ENCODE measurements at regions of chr4 and their contacts with region 1.

Region 1: DNA sequence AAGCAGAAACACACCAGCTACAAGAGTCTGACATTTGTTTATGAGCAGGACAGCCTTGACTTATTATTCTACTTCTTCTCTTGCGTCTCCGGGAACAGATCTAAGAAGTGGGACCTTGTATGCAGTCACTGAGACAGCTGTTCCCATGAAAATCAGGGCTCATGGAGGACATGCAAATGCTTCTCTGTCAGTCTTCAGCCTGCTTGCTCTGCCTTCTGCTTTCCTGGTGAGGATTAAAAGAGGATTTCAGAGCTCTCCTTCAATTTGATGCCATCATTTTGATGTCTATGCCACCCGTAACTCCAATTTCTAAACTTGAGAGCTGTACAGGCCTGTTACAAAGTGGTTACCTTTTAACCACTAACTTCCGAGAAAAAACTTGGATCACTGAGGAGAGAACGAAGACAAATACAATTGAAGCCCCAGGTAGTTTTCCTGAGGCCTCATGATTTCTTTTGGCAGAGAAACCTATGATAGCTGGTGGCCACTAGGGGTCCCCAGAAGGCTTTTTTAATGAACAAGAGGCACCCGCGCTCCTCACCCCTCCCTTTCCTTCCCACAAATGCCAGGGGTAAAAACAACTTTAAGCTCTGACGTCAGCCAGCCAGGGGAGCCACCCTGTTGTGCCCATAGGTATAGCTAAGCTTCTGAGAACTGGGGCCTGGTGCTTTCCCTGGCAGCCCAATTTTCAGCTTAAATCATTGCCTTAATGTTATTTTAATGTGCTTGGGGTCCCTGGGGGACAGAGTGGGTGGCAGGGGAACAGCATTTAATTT is 97.0 kb downstream of the DDIT4L start:
- DNase-seq: peak; percentile 62 to 94
- H3K4me3 ChIP-seq: no peak overlapping the region
- H3K27ac ChIP-seq: peak overlapping the region; percentile 37 to 64
- H3K4me1 ChIP-seq: peaks cover 0 to 9% of the 10 kb centered on the region in 2 donors
- H3K27me3 ChIP-seq: no peaks in the 10 kb centered on the region
- CTCF ChIP-seq: peak; percentile 45 to 88 (median 84)

Region 2: DNA sequence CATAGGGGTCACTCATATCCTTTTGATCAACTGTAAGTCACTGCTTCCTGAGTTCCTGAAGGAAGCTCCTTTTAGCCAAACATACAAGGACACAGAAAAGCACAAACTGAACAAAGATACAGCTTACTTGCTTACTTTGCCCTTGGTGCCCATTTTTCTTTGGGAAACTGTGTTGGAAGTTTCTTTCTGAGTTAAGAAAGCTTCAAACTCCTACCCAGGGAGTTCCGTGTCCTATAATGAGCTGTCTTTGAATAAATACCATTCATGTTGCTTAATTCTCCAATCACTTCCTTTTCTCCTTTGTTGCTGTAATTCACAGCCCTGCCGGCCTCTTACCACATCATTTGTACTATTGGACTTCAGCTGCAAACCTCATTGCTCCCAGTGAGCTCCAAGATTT is 949.2 kb before region 1 on chr4 and contains the start of gene ADH4:
- intact Hi-C with region 1: loop called (anchors 5 kb)
- DNase-seq: no peak
- H3K4me3 ChIP-seq: no peak within 1 kb of the TSS
- H3K27ac ChIP-seq: peak within 1 kb of the TSS; percentile 27 to 35
- H3K4me1 ChIP-seq: peaks cover 0 to 2% of the 10 kb centered on the region in 2 donors
- H3K27me3 ChIP-seq: no peaks in the 10 kb centered on the region
- CTCF ChIP-seq: no peak
- total RNA-seq, gene ADH4: 0.96 TPM

Region 3: GRCh38 chr4:100299046-100299840 is 206.0 kb after region 1 on chr4:
- intact Hi-C with region 1: loop called (anchors 5 kb)
- DNase-seq: peak in 1 of 2 donors; percentile 67
- H3K4me3 ChIP-seq: no peak overlapping the region
- H3K27ac ChIP-seq: peak overlapping the region; percentile 37 to 39
- H3K4me1 ChIP-seq: peaks cover 0 to 22% of the 10 kb centered on the region in 2 donors
- H3K27me3 ChIP-seq: no peaks in the 10 kb centered on the region
- CTCF ChIP-seq: no peak

Region 4: DNA sequence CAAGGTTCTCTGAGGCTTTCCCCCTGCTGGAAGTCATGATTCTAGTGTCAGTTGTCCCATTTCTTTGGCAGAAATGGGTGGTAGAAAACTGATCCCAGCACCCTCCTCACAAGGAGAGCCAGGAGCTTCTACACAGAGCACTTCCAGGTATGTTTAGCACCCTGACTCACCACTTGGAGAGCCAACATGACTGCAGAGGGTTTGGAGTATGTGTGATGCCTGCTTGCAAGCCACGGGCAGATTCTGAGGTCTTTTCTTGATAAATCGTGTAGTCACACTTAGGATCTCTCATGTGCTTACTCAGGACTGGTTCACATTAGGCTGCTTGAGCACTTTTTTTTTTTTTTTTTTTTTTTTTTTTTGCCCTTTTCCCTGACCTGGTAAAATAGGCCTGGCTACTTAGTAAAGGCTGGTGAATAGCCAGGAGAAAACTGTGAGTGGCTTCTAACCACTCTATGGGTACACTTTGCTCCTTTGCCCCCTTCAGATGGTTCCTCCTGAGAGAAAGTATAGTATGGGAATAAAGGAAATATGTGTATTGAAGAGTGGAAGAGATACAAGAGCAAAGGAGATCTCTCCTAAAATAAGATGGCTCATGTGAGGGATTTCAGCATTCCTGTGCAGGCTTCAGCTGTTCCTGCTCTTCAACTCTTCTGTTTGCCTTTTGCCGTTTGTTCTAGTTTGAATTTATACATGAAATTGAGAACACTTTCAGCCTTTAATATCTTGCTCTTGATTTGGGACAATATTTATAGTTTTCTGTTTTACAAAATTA is 320.9 kb after region 1 on chr4:
- intact Hi-C with region 1: loop called (anchors 5 kb)
- DNase-seq: no peak
- H3K4me3 ChIP-seq: no peak overlapping the region
- H3K27ac ChIP-seq: peak overlapping the region in 1 of 2 donors; percentile 28
- H3K4me1 ChIP-seq: no peaks in the 10 kb centered on the region
- H3K27me3 ChIP-seq: no peaks in the 10 kb centered on the region
- CTCF ChIP-seq: no peak

Region 5: GRCh38 chr4:100421361-100421978 is 328.2 kb after region 1 on chr4:
- intact Hi-C with region 1: loop called (anchors 2 kb)
- DNase-seq: no peak
- H3K4me3 ChIP-seq: peak overlapping the region in 1 of 2 donors; percentile 9
- H3K27ac ChIP-seq: peak overlapping the region in 1 of 2 donors; percentile 46
- H3K4me1 ChIP-seq: peaks cover 0 to 8% of the 10 kb centered on the region in 2 donors
- H3K27me3 ChIP-seq: no peaks in the 10 kb centered on the region
- CTCF ChIP-seq: peak in 2 of 3 experiments; percentile 46 to 49

Region 6: GRCh38 chr4:100742045-100742444 is 648.8 kb after region 1 on chr4:
- intact Hi-C with region 1: loop called (anchors 5 kb)
- DNase-seq: no peak
- H3K4me3 ChIP-seq: no peak overlapping the region
- H3K27ac ChIP-seq: no peak overlapping the region
- H3K4me1 ChIP-seq: no peaks in the 10 kb centered on the region
- H3K27me3 ChIP-seq: no peaks in the 10 kb centered on the region
- CTCF ChIP-seq: peak in 1 of 3 experiments; percentile 19

Region 7: GRCh38 chr4:101169044-101170014 is 1076.0 kb after region 1 on chr4:
- intact Hi-C with region 1: loop called (anchors 10 kb)
- DNase-seq: peak in 1 of 2 donors; percentile 64
- H3K4me3 ChIP-seq: no peak overlapping the region
- H3K27ac ChIP-seq: no peak overlapping the region
- H3K4me1 ChIP-seq: no peaks in the 10 kb centered on the region
- H3K27me3 ChIP-seq: no peaks in the 10 kb centered on the region
- CTCF ChIP-seq: peak; percentile 25 to 59 (median 44)